PC-3 (cell line): ENCODE measurements at regions of chr12 and their contacts with region 1.

Region 1: GRCh38 chr12:119649202-119649808 is 18.6 kb upstream of the PRKAB1 start:
- DNase-seq: peak; percentile 61
- ATAC-seq: peak; percentile 37; the same call in 1 of the 2 replicates
- H3K4me3 ChIP-seq: no peak overlapping the region
- H3K27ac ChIP-seq: no peak overlapping the region
- H3K4me1 ChIP-seq: no peaks in the 10 kb centered on the region
- H3K27me3 ChIP-seq: peaks cover 27% of the 10 kb centered on the region
- CTCF ChIP-seq: peak; percentile 92

Region 2: DNA sequence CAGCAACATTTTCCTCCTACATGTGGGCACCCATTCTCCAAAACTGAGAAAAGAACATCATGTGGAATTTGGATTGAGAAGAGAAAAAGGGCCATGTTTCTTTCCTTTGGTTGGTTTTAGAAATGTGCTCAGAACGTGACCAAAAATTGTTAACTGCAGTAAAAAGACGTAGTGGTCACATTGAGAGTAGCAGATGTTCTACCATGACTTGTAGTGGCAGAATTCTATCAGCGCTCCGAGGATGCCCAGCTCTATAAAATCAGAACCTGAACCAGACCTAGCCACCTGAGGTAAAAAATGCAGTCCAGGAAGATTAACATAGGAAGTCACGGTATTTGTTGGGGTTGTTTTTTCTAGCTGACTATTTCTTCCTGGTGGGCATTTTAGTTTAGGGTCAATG is 157.5 kb before region 1 on chr12:
- CTCF ChIA-PET with region 1: no interaction called
- POLR2A ChIA-PET with region 1: no interaction called
- intact Hi-C with region 1: no loop called
- DNase-seq: no peak
- ATAC-seq: no peak
- H3K4me3 ChIP-seq: no peak overlapping the region
- H3K27ac ChIP-seq: no peak overlapping the region
- H3K4me1 ChIP-seq: no peaks in the 10 kb centered on the region
- H3K27me3 ChIP-seq: peaks cover 74% of the 10 kb centered on the region
- CTCF ChIP-seq: no peak

Region 3: DNA sequence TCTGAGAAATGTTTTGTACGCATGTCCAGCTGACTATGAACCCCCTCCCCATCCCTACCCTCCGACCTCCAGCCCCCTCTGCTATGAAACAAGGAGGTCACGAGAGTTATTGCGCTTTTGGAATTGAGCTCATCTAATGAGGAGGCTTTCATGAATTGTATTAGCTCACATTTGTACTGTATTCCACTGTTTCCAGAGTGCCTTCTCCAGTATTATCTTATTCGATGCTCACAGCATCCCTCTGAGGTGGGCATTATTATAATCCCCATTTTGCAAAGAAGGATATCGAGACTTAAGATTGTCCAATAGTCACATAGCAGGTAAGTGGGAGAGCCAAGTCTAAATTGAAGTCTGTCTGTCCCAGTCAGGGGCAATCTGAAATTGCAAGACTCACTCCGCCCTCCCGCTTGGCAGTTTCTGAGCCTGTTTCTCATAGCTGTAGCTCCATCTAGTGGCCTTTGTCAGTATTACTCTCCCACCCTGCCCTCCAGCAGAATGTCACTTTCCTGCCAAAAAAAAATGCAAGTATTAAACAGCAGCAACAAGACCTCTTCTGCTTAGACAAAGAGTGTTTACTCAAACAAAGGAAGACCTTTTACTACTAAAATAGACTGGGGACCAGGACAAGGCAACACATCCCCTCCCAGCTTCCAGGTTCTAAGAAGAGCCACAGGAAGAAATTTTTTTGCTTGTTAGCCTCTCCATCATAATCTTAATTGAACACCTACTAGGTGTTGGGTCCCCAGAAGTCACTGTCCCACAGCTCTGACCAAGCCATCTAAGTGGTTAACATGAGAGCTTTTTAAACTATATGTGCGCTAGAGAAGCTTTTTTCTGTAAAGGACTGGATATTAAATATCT is 104.3 kb before region 1 on chr12:
- CTCF ChIA-PET with region 1: no interaction called
- POLR2A ChIA-PET with region 1: no interaction called
- intact Hi-C with region 1: loop called (anchors 5 kb)
- DNase-seq: peak; percentile 85
- ATAC-seq: peak; percentile 94
- H3K4me3 ChIP-seq: no peak overlapping the region
- H3K27ac ChIP-seq: no peak overlapping the region
- H3K4me1 ChIP-seq: no peaks in the 10 kb centered on the region
- H3K27me3 ChIP-seq: peaks cover 26% of the 10 kb centered on the region
- CTCF ChIP-seq: peak; percentile 93

Region 4: DNA sequence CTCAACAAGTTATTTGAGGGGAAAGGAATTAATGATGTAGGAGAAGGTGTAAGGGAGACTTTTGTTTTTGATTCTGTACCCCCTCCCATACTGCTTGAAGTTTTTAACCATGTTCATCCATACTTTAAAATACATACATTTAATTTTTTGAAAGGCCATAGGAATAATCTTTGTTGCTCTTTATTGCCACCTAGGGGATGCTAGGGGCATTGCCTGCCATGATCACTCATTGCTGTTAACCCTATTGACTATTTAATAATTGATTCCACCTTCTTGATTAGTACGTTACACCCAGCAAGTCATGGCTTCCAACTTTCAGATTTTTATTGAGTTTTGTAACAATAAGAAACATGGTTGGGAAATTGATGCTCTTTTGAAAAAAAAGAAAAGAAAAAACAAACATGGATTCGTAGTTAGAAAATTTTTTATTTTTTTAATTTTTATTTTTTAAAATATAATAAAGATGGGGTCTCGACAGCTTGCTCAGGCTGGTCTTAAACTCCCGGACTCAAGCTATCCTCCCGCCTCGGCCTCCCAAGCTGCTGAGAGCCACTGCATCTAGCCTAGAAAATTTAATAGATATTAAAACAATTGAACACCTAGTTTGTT is 10.1 kb after region 1 on chr12:
- CTCF ChIA-PET with region 1: interaction called, 11 read pairs
- POLR2A ChIA-PET with region 1: no interaction called
- intact Hi-C with region 1: no loop called
- DNase-seq: peak; percentile 71
- ATAC-seq: peak; percentile 45
- H3K4me3 ChIP-seq: no peak overlapping the region
- H3K27ac ChIP-seq: no peak overlapping the region
- H3K4me1 ChIP-seq: no peaks in the 10 kb centered on the region
- H3K27me3 ChIP-seq: 0 out of 2 replicates have a peak, but pooled peaks cover 5% of the 10 kb centered on the region
- CTCF ChIP-seq: peak; percentile 88

Region 5: GRCh38 chr12:119679081-119679480 is 29.8 kb after region 1 on chr12:
- CTCF ChIA-PET with region 1: interaction called, 10 read pairs
- POLR2A ChIA-PET with region 1: no interaction called
- intact Hi-C with region 1: no loop called
- DNase-seq: no peak
- ATAC-seq: no peak
- H3K4me3 ChIP-seq: no peak overlapping the region
- H3K27ac ChIP-seq: no peak overlapping the region
- H3K4me1 ChIP-seq: peaks cover 18% of the 10 kb centered on the region
- H3K27me3 ChIP-seq: no peaks in the 10 kb centered on the region
- CTCF ChIP-seq: no peak